Activated T-helper 1 cell treated with anti-CD3 and anti-CD28 coated beads, Interleukin-12 subunit alpha, Interleukin-12 subunit beta, Interleukin-2, Interleukin-4 antibody, amounts not matched to agents 30 ng/mL and 10 ng/mL and 1 ng/mL, durations not matched to agents 14 hours and 24 hours and 36 hours (primary cell): ENCODE measurements at regions of chr20 and their contacts with region 1.

Region 1: DNA sequence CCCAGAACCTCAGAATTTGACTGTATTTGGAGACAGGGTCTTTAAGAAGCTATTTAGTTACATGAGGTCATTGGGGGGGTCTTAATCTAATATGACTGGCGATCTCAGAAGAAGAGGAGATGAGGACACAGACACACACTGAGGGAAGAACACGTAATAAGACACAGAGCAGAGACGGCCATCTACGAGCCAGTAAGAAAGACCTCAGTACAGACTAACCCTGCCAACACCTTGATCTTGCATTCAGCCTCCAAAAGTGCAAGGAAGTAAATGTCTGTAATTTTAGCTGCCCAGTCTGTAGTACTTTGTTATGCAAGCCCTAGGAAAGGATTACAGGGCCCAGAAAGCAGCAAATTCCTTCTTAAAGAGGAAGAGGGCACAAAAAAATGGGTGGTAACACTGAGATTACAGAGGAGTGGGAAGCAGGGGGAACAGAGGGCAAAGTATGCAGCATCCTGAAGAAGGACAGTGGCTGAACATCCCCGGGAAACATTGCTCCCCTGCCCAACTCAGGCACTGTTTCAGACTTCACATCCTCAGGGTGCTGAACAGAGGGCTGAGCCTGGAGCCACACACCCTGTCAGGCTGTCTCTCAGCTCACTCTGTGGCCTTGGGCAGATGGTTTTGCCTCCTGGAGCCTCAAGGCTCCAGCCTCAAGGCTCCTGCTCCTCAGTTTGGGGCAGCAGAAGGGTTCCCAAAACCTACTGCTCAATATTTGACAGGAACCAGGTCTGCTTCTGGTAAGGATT is 27.9 kb upstream of the SIRPG start:
- DNase-seq: no peak
- H3K4me3 Mint-ChIP-seq: peak overlapping the region; percentile 63
- H3K27ac Mint-ChIP-seq: peak overlapping the region; percentile 79
- H3K4me1 Mint-ChIP-seq: peaks cover 63% of the 10 kb centered on the region
- H3K27me3 Mint-ChIP-seq: no peaks in the 10 kb centered on the region

Region 2: DNA sequence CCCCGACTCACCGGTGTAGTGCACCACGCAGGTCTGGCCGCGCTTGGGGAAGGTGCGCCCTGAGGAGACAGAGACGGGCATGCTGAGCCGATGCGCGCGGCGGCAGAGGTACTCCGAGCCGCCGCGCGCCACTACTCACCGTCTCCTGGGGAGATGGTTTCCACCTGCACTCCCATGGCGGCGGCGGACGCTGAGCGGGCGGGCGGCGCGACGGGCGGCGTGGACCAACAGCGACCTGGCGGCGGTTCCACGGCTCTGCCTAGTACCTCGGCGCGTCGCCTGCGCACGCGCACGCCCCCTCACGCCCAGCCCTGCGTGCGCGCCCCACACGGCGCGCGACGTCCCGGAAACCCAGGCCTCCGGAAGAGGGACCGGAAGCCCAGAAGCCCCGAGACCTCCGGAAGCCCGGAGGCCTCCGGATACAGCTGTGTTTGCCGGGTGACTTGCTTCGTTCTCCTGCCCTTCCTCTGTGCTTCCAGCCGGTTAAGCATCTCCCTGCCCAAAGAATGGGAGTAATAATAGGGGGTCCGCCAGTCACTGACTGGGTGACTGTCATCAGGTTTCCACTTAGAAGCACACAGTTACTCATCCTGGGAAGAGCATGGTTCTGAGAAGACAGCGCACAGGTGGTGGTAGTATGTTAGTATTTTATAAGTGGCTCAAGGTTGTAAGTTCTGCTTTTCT is 292.5 kb before region 1 on chr20 and contains the start of gene FKBP1A:
- intact Hi-C with region 1: no loop called
- DNase-seq: peak; percentile 89
- H3K4me3 Mint-ChIP-seq: peak within 1 kb of the TSS; percentile 94
- H3K27ac Mint-ChIP-seq: peak within 1 kb of the TSS; percentile 92
- H3K4me1 Mint-ChIP-seq: peaks cover 65% of the 10 kb centered on the region
- H3K27me3 Mint-ChIP-seq: peaks cover 18% of the 10 kb centered on the region
- total RNA-seq, gene FKBP1A: 295 and 297 TPM in 2 replicates

Region 3: DNA sequence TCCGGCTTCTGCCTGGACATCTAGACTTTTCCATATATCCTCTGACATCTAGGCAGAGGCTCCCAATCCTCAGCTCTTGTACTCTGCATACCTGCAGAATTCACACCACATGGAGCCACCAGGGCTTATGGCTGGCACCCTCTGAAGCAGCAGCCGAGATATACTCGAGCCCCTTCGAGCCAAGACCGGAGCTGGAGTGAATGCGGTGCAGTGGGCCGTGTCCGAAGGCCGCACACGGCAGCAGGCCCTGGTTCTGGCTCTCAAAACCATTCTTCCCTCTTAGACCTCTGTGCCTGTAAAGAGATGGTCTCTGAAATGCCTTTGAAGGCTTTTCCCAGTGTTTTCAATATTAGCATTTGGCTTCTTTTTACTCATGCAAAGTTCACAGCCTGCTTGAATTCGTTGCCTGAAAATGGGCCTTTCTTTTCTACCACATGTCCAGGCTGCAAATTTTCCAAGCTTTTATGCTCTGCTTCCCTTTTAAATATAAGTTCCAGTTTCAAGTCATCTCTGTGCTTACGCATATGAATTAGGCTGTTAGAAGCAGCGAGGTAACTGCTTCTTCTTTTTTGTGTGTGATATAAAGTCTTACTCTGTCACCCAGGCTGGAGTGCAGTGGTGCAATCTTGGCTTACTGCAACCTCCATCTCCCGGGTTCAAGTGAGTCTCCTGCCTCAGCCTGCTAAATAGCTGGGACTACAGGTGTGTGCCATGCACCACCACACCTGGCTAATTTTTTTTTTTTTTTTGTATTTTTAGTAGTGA is 61.8 kb before region 1 on chr20:
- intact Hi-C with region 1: loop called (anchors 2 kb)
- DNase-seq: no peak
- H3K4me3 Mint-ChIP-seq: no peak overlapping the region
- H3K27ac Mint-ChIP-seq: peak overlapping the region; percentile 36
- H3K4me1 Mint-ChIP-seq: peaks cover 87% of the 10 kb centered on the region
- H3K27me3 Mint-ChIP-seq: no peaks in the 10 kb centered on the region

Region 4: DNA sequence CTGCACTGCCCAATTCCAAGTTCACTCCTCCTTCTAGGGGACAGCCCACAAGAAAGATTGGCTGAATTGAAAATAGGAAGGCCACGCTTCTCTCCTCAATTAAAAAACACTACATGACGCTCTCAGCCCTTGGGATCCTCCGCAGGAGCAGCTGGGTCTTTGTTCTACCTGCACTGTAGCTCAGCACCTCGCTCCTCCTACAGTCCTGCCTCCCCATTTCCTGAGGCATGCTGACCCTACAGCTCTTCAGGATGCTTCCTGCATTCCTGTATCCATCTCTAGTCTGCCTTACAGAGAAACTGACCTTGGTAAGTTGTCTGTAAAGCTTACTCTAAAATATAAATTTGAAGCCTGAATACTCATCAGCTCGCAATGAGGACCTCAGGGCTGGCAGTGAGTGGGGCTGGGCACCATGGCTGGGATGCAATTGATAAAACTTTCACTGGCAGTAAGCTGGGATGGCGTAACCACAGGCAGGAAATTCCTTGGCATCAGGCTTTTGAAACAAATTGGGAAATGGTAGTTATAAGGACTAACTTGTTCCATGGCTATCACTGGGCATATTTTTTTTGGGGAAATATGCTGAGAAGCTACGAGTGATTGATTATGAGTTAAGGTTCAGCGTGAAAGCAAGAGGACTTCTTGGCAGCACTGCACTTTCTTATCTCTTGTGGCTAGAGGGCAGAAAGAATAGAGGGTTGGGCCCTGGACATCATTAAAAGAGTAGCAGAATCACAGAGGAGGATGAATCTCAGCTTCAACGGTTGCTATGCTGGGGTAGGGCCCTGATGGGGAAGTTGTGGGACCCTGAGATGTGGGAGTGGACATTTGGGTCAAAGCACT is 53.9 kb before region 1 on chr20:
- intact Hi-C with region 1: loop called (anchors 1 kb)
- DNase-seq: no peak
- H3K4me3 Mint-ChIP-seq: no peak overlapping the region
- H3K27ac Mint-ChIP-seq: peak overlapping the region; percentile 76
- H3K4me1 Mint-ChIP-seq: peaks cover 47% of the 10 kb centered on the region
- H3K27me3 Mint-ChIP-seq: no peaks in the 10 kb centered on the region

Region 5: GRCh38 chr20:1651268-1652058 is 34.0 kb before region 1 on chr20:
- intact Hi-C with region 1: loop called (anchors 5 kb)
- DNase-seq: no peak
- H3K4me3 Mint-ChIP-seq: peak overlapping the region; percentile 40
- H3K27ac Mint-ChIP-seq: peak overlapping the region; percentile 81
- H3K4me1 Mint-ChIP-seq: peaks cover 79% of the 10 kb centered on the region
- H3K27me3 Mint-ChIP-seq: no peaks in the 10 kb centered on the region

Region 6: DNA sequence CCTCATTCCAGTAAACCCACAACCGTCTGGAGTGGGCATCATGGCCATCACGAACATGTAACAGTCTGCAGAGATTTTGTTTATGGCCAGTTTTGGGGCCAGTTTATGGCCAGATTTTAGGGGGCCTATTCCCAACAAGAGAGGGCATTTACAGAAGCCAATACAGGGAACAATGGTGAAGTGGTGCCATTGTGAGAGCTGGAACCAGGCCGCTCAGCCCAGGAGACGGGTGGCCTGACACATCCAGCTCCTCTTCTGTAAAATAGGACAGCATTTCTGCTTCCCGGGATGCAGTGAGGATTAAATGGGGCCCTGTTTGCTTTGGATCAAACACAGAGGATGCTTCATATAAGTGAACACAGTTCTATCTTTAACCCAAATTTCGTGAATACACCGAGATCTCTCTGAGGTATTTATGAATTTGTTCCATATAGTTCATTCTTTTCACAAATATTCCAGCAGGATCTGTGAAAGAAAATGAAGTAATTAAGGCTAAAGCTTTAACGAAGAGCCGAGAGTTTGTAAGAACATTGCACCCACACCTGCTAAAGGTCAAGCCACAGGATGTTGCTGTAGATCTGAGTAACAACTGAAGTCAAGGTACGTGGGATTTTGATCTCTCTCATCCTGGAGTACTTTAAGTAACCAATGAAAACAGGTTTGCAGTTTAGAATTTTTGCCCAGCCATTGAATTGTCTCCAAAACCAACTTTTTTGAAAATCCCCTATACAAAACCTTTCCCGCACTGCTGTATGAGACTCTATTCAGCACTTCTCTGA is 13.4 kb before region 1 on chr20:
- intact Hi-C with region 1: loop called (anchors 1 kb)
- DNase-seq: no peak
- H3K4me3 Mint-ChIP-seq: peak overlapping the region; percentile 76
- H3K27ac Mint-ChIP-seq: peak overlapping the region; percentile 93
- H3K4me1 Mint-ChIP-seq: peaks cover 95% of the 10 kb centered on the region
- H3K27me3 Mint-ChIP-seq: no peaks in the 10 kb centered on the region

Region 7: DNA sequence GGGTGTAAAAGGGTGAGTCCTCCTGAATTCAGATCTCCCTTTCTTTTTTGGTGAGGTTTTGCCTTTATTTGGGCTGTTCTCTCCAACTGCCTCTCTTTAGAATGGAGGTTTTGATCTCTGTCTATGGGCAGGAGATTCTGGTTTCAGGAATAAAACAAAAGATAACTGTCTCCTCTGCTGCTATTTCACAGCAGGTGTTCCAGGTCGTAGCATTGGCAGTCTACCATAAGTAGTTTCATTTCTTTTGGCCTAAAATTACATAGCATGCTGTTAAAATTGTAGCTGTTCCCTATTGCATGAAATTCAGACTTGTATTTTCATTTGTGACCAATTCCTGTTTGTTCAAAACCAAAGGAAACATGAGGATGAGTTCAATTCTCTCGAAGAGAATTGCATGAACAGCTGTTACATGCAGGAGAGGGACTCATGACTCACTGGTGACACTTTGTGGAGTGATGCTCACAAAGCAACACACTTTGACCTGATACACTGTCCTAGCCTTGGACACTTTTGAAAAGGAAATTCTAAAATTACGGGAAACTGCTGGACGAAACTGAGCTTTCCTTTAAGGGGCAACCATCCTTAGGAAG is 48.9 kb after region 1 on chr20:
- intact Hi-C with region 1: loop called (anchors 5 kb)
- DNase-seq: no peak
- H3K4me3 Mint-ChIP-seq: no peak overlapping the region
- H3K27ac Mint-ChIP-seq: no peak overlapping the region
- H3K4me1 Mint-ChIP-seq: peaks cover 40% of the 10 kb centered on the region
- H3K27me3 Mint-ChIP-seq: peaks cover 2% of the 10 kb centered on the region